Breast epithelium (tissue), 4 donors: ENCODE measurements at regions of chr3 and their contacts with region 1.

Region 1: GRCh38 chr3:53303957-53304356 is 43.4 kb downstream of the DCP1A start:
- DNase-seq: no peak
- H3K4me3 ChIP-seq: no peak overlapping the region
- H3K27ac ChIP-seq: no peak overlapping the region
- H3K4me1 ChIP-seq: no peaks in the 10 kb centered on the region
- H3K27me3 ChIP-seq: no peaks in the 10 kb centered on the region
- CTCF ChIP-seq: no peak
- POLR2A ChIP-seq: no peak

Region 2: GRCh38 chr3:53122933-53123305 is 181.0 kb before region 1 on chr3:
- intact Hi-C with region 1: no loop called
- DNase-seq: no peak
- H3K4me3 ChIP-seq: no peak overlapping the region
- H3K27ac ChIP-seq: no peak overlapping the region
- H3K4me1 ChIP-seq: no peaks in the 10 kb centered on the region
- H3K27me3 ChIP-seq: no peaks in the 10 kb centered on the region
- CTCF ChIP-seq: no peak
- POLR2A ChIP-seq: no peak

Region 3: DNA sequence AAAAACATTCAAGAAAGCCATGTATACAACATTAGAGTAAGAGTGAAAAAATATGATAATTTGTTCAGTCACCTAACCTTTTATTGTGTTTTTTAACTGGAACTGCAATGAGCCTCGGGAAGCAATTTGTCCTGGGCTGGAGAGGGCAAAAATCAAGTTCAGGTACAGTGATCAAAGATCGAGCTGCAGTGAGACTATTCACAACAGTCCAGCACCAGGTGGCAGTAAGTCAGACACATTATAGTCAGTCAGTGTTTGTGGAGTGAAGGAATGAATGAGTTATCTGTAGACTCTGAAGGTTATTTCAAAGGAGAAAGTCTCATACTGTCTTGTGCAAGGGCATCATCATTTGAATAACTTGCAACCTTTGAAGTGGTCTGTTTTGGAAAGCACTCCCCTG is 425.7 kb after region 1 on chr3:
- intact Hi-C with region 1: loop called (anchors 10 kb)
- DNase-seq: no peak
- H3K4me3 ChIP-seq: no peak overlapping the region
- H3K27ac ChIP-seq: no peak overlapping the region
- H3K4me1 ChIP-seq: no peaks in the 10 kb centered on the region
- H3K27me3 ChIP-seq: no peaks in the 10 kb centered on the region
- CTCF ChIP-seq: no peak
- POLR2A ChIP-seq: no peak

Region 4: GRCh38 chr3:53834429-53835095 is 530.6 kb after region 1 on chr3:
- intact Hi-C with region 1: no loop called
- DNase-seq: no peak
- H3K4me3 ChIP-seq: no peak overlapping the region
- H3K27ac ChIP-seq: no peak overlapping the region
- H3K4me1 ChIP-seq: no peaks in the 10 kb centered on the region
- H3K27me3 ChIP-seq: no peaks in the 10 kb centered on the region
- CTCF ChIP-seq: no peak
- POLR2A ChIP-seq: no peak

Region 5: DNA sequence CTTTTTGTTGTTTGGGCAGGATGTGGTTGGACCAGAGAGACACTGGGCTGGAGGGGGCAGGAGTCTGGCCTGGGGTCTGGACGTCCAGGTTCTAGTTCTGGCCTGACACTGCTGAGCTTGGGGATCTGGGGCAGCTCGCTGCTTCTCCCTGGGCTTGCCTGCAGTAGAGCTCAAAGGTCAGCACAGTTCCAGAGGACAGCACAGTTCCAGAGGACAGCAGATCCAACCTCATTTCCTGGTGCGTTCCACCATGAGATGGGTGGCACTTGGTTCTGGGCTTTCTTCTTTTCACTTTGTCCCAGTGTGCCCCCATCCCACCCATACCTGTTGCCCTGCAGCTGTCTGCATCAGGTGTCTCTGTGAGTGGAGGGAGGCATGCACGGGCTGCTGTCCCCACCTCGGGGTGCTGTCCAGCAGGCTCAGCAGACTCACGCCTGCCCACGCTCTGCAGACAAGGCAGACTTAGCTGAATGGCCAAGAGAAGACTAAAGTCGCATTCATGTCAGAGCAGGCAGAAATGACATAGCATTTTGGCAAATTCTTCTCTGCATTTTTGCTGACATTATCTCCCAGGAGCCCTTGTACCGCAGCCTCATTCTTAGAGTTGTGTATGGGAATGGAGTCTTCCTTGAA is 835.1 kb after region 1 on chr3:
- intact Hi-C with region 1: no loop called
- DNase-seq: no peak
- H3K4me3 ChIP-seq: no peak overlapping the region
- H3K27ac ChIP-seq: no peak overlapping the region
- H3K4me1 ChIP-seq: no peaks in the 10 kb centered on the region
- H3K27me3 ChIP-seq: no peaks in the 10 kb centered on the region
- CTCF ChIP-seq: no peak
- POLR2A ChIP-seq: no peak